Calu3 (cell line): ENCODE measurements at regions of chr2 and their contacts with region 1.

Region 1: GRCh38 chr2:205017381-205017780 is 472.1 kb downstream of the PARD3B start:
- DNase-seq: no peak
- H3K4me3 Mint-ChIP-seq: no peak overlapping the region
- H3K27ac Mint-ChIP-seq: no peak overlapping the region
- H3K4me1 Mint-ChIP-seq: peaks cover 9% of the 10 kb centered on the region
- H3K27me3 Mint-ChIP-seq: no peaks in the 10 kb centered on the region
- CTCF ChIP-seq: no peak

Region 2: DNA sequence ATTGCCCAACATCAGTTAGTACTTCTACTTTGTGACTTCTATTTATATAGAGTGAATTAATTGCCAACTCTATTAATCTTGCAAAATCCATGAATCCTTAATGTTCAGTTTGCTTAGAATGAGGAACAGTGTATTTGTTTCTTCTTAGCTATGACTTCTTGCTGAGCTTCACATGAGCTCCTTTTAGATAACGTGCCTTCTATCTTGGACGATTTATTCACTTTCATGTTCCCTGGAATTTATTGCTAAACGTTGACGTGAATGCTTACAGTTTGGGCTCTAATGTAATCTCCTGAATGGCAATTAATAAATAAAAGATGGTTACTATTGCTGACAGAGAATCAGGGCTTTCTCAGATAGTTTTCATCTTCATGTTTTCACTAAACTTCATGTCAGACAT is 280.5 kb after region 1 on chr2:
- CTCF ChIA-PET with region 1: interaction called, 12 read pairs
- intact Hi-C with region 1: no loop called
- DNase-seq: no peak
- H3K4me3 Mint-ChIP-seq: no peak overlapping the region
- H3K27ac Mint-ChIP-seq: no peak overlapping the region
- H3K4me1 Mint-ChIP-seq: peaks cover 10% of the 10 kb centered on the region
- H3K27me3 Mint-ChIP-seq: no peaks in the 10 kb centered on the region
- CTCF ChIP-seq: no peak